ENCODE measurements at regions of chr6 and their contacts with region 1.

Region 1: GRCh38 chr6:7312616-7313504 is at the start of gene SSR1:
- DNase-seq: peak; percentile 97 to 99 (median 98)
- ATAC-seq: peak; percentile 98 to 100 (median 99)
- H3K4me3 ChIP-seq: peak within 1 kb of the TSS; percentile 78 to 99 (median 96)
- H3K27ac ChIP-seq: peak within 1 kb of the TSS; percentile 87 to 96 (median 94)
- H3K4me1 ChIP-seq: peaks cover 8 to 34% (median 21%) of the 10 kb centered on the region in 3 donors
- H3K27me3 ChIP-seq: no peaks in the 10 kb centered on the region
- CTCF ChIP-seq: no peak
- total RNA-seq, gene SSR1: 64.3 to 138 (median 109) TPM

Region 2: GRCh38 chr6:7389451-7390225 is 76.8 kb after region 1 on chr6 and contains the starts of genes CAGE1 and RIOK1:
- intact Hi-C with region 1: loop called in 1 of 3 experiments (anchors 10 kb)
- DNase-seq: peak; percentile 90 to 97 (median 93)
- ATAC-seq: peak; percentile 98 to 99 (median 99)
- H3K4me3 ChIP-seq: peak within 1 kb of the TSS; percentile 72 to 83 (median 78)
- H3K27ac ChIP-seq: peak within 1 kb of the TSS; percentile 73 to 92 (median 86)
- H3K4me1 ChIP-seq: peaks cover 0 to 23% (median 16%) of the 10 kb centered on the region in 3 donors
- H3K27me3 ChIP-seq: no peaks in the 10 kb centered on the region
- CTCF ChIP-seq: no peak
- total RNA-seq, gene CAGE1: 0.09 TPM in 1 of 6 donors, not detected in the others
- total RNA-seq, gene RIOK1: 6.6 to 10.9 (median 9.5) TPM

Region 3: DNA sequence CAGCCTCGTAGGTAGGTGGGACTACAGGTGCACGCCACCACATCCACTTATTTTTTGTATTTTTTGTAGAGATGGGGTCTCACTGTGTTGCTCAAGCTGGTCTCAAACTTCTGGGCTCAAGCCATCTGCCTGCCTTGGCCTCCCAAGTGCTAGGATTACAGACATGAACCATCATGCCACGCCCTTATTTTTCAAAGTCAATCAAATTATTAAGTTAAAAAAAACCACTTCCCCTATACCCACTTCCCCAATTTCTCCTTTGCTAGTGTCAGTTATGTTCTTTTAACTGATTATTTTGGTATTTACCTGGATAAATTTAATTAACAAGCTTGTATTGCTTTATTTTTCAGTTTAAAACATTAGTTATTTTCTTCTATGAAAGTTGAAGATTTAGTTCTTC is 126.4 kb after region 1 on chr6:
- intact Hi-C with region 1: no loop called
- DNase-seq: no peak
- ATAC-seq: peak in 1 of 4 donors; percentile 40
- H3K4me3 ChIP-seq: no peak overlapping the region
- H3K27ac ChIP-seq: no peak overlapping the region
- H3K4me1 ChIP-seq: no peaks in the 10 kb centered on the region
- H3K27me3 ChIP-seq: no peaks in the 10 kb centered on the region
- CTCF ChIP-seq: no peak

Measured in pancreas (tissue), 10 donors.